Activated CD4-positive, alpha-beta T cell treated with anti-CD3 and anti-CD28 coated beads, Interleukin-2, amount 10 ng/mL, durations not matched to agents 7 days and 5 days (primary cell): ENCODE measurements at regions of chr2 and their contacts with region 1.

Region 1: GRCh38 chr2:96517079-96517478 is 11.9 kb upstream of the NEURL3 start:
- DNase-seq: no peak
- H3K4me3 Mint-ChIP-seq: no peak overlapping the region
- H3K27ac Mint-ChIP-seq: no peak overlapping the region
- H3K4me1 Mint-ChIP-seq: peaks cover 12% of the 10 kb centered on the region
- H3K27me3 Mint-ChIP-seq: peaks cover 4% of the 10 kb centered on the region

Region 2: DNA sequence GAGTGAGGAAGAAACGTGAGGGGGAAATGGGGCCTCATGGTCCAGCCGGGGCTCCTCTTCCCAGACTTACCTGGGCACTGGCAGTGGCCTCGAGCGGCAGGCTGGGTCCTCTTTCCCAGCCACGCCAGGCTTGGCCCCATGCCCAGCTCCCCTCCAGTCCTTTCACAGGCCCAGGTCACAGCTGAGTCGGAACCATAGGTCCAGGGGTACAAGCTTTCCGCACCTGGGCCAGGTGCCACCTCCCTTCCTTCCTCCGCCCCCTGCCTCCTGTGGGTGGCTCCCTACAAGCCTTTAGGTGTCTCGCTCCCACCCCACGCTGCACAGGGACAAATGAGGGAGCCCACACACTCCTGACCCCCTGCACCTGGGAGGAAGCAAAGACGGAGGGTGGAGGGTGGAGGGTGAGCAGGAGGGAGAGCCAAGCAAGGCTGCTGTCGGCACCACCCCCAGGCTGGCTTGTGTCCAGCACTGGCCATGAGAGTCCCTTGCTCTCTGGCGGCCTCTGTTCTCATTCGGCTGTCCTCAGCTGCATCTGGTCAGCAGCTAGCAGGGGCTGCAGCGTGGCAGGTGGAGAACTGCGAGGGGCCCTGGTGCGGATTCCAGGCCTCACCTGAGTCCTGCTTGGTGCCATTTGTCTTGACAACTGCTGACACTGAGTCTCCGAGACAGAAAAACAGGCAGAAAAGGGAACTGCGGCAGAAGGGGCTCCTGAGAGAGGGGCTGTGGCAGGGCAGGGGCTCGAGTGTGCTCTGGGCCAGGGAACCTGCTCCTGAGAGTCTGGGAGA is 427.5 kb before region 1 on chr2:
- CTCF ChIA-PET with region 1: no interaction called
- POLR2A ChIA-PET with region 1: no interaction called
- DNase-seq: peak; percentile 4
- H3K4me3 Mint-ChIP-seq: no peak overlapping the region
- H3K27ac Mint-ChIP-seq: no peak overlapping the region
- H3K4me1 Mint-ChIP-seq: no peaks in the 10 kb centered on the region
- H3K27me3 Mint-ChIP-seq: peaks cover 12% of the 10 kb centered on the region

Region 3: GRCh38 chr2:96527286-96528005 is 10.4 kb after region 1 on chr2:
- CTCF ChIA-PET with region 1: interaction called, 11 read pairs
- POLR2A ChIA-PET with region 1: interaction called, 3 read pairs
- DNase-seq: peak; percentile 73
- H3K4me3 Mint-ChIP-seq: peak overlapping the region; percentile 72
- H3K27ac Mint-ChIP-seq: peak overlapping the region; percentile 87
- H3K4me1 Mint-ChIP-seq: peaks cover 90% of the 10 kb centered on the region
- H3K27me3 Mint-ChIP-seq: no peaks in the 10 kb centered on the region